MCF 10A (cell line): ENCODE measurements at regions of chrX and their contacts with region 1.

Region 1: GRCh38 chrX:2707334-2707760 is 16.3 kb downstream of the CD99 start:
- DNase-seq: peak; percentile 96
- H3K4me3 Mint-ChIP-seq: peak overlapping the region; percentile 63
- H3K27ac Mint-ChIP-seq: peak overlapping the region; percentile 95
- H3K4me1 Mint-ChIP-seq: peaks cover 39% of the 10 kb centered on the region
- H3K27me3 Mint-ChIP-seq: no peaks in the 10 kb centered on the region
- CTCF ChIP-seq: no peak

Region 2: GRCh38 chrX:2643880-2644279 is 63.5 kb before region 1 on chrX:
- CTCF ChIA-PET with region 1: no interaction called
- POLR2A ChIA-PET with region 1: no interaction called
- intact Hi-C with region 1: loop called (anchors 1 kb)
- DNase-seq: no peak
- H3K4me3 Mint-ChIP-seq: no peak overlapping the region
- H3K27ac Mint-ChIP-seq: no peak overlapping the region
- H3K4me1 Mint-ChIP-seq: no peaks in the 10 kb centered on the region
- H3K27me3 Mint-ChIP-seq: no peaks in the 10 kb centered on the region
- CTCF ChIP-seq: no peak

Region 3: DNA sequence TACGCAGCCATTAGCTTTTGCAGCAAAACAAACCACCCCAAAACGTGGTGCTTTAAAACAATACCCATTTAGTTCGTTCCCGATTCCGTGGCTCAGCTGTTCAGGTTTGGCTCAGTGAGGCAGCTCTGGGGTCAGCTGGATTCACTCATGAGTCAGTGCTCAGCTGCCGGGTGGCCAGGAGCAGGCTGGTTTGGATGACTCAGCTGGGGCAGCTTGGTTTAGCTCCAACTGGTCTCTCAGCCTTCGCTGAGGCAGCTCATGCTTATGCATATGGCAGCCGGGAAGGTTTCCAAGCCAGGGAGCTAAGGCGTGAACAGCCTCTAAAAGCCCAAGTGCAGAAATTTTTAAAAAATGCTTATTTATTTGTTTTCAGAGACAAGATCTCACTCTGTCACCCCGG is 29.6 kb before region 1 on chrX:
- CTCF ChIA-PET with region 1: no interaction called
- POLR2A ChIA-PET with region 1: no interaction called
- intact Hi-C with region 1: loop called (anchors 1 kb)
- DNase-seq: peak; percentile 96
- H3K4me3 Mint-ChIP-seq: peak overlapping the region; percentile 49
- H3K27ac Mint-ChIP-seq: no peak overlapping the region
- H3K4me1 Mint-ChIP-seq: peaks cover 22% of the 10 kb centered on the region
- H3K27me3 Mint-ChIP-seq: no peaks in the 10 kb centered on the region
- CTCF ChIP-seq: no peak

Region 4: DNA sequence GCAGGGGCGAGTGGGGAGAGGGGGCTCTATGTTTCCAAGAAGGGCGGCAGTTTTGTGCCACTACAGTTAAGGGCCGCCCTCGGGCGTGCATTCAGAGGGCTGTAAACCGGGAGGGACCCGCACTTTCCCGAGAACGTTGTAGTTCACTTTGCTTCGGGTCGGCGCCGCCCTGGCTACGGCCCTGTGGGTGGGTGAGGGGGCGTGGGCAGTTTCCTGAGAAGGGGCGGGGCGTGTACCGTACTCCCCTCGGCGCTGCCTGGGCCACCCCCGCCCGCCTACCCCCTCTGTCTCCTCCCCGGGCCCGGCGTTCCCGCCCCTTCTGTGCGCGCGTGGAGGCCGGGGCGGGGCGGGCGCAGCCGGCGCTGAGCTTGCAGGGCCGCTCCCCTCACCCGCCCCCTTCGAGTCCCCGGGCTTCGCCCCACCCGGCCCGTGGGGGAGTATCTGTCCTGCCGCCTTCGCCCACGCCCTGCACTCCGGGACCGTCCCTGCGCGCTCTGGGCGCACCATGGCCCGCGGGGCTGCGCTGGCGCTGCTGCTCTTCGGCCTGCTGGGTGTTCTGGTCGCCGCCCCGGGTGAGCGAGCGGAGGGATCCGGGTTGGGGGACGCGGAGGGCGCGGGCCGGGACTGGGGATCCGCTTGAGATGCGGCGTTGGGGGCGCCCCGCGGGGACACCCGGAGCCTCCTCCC is 16.3 kb before region 1 on chrX and contains the start of gene CD99:
- CTCF ChIA-PET with region 1: no interaction called
- POLR2A ChIA-PET with region 1: no interaction called
- intact Hi-C with region 1: loop called (anchors 1 kb)
- DNase-seq: peak; percentile 76
- H3K4me3 Mint-ChIP-seq: peak within 1 kb of the TSS; percentile 94
- H3K27ac Mint-ChIP-seq: peak within 1 kb of the TSS; percentile 96
- H3K4me1 Mint-ChIP-seq: peaks cover 13% of the 10 kb centered on the region
- H3K27me3 Mint-ChIP-seq: no peaks in the 10 kb centered on the region
- CTCF ChIP-seq: no peak
- total RNA-seq, gene CD99: 173 and 176 TPM in 2 replicates

Region 5: DNA sequence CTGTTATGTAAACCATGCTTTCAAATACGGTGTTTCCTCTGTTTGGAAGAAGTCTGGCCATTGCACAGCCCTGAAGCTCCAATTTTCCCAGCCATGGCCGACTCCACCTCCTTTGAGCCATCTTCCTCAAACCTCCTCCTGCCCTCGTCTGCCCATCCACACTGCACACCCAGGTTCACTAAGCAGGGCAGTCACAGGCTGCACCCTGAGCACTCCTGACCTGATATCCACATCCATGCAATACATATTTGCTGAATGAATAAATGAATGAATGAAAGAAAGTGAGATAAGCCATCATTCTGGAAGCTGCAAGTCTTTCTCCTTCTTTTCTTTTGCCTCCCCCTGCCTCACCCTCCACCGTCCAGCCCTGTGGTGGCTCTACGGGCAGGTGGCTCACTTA is 66.7 kb after region 1 on chrX:
- CTCF ChIA-PET with region 1: no interaction called
- POLR2A ChIA-PET with region 1: no interaction called
- intact Hi-C with region 1: no loop called
- DNase-seq: no peak
- H3K4me3 Mint-ChIP-seq: no peak overlapping the region
- H3K27ac Mint-ChIP-seq: no peak overlapping the region
- H3K4me1 Mint-ChIP-seq: no peaks in the 10 kb centered on the region
- H3K27me3 Mint-ChIP-seq: peaks cover 26% of the 10 kb centered on the region
- CTCF ChIP-seq: no peak